Spleen (tissue), 13 donors: ENCODE measurements at regions of chr10 and their contacts with region 1.

Region 1: DNA sequence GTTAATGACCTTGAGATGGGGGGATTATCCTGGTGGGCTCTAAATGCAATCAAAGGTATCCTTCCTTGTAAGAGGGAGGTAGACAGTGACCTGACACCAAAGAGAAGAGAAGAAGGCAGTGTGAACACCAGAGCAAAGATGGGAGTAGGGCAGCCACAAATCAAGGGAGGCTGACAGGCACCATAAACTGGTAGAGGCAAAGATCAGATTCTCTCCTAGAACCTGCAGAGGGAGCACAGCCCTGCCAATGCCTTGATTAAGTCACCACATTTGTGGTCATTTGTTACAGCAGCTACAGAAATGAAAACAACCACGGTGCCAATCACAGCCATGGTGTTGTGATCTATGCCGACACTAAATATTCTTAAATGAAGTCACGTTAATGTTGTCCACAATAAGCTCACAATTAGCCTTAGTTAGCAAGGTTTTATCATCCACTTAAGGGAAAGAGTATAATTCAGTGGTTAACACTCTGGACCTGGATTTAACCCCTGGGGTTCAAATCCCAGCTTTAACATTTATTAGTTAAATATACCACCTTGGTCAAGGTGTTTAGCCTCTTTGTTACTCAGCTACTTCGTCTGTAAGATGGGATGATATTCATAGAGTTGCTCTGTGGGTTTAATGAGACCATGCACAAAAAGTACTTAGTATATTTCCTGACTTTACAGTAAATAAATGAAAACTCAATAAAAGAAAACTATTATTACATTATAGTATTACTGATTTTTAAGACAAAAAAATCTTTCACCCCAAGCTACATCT is 70.8 kb downstream of the SGMS1 start:
- DNase-seq: no peak
- H3K4me3 ChIP-seq: no peak overlapping the region
- H3K27ac ChIP-seq: peak overlapping the region in 3 of 8 donors; percentile 4 to 32 (median 4)
- H3K4me1 ChIP-seq: peaks cover 4 to 78% (median 41%) of the 10 kb centered on the region in 6 donors
- H3K27me3 ChIP-seq: no peaks in the 10 kb centered on the region
- CTCF ChIP-seq: peak in 4 of 11 experiments; percentile 10 to 33 (median 18)
- POLR2A ChIP-seq: no peak

Region 2: GRCh38 chr10:50396491-50397311 is 156.3 kb before region 1 on chr10:
- intact Hi-C with region 1: no loop called
- DNase-seq: no peak
- H3K4me3 ChIP-seq: no peak overlapping the region
- H3K27ac ChIP-seq: peak overlapping the region in 2 of 8 donors; percentile 2 to 15
- H3K4me1 ChIP-seq: peaks cover 0 to 69% (median 34%) of the 10 kb centered on the region in 6 donors
- H3K27me3 ChIP-seq: no peaks in the 10 kb centered on the region
- CTCF ChIP-seq: no peak
- POLR2A ChIP-seq: no peak

Region 3: GRCh38 chr10:50614444-50615137 is 61.6 kb after region 1 on chr10:
- intact Hi-C with region 1: loop called (anchors 10 kb)
- DNase-seq: no peak
- H3K4me3 ChIP-seq: no peak overlapping the region
- H3K27ac ChIP-seq: no peak overlapping the region
- H3K4me1 ChIP-seq: peaks cover 9 to 88% (median 31%) of the 10 kb centered on the region in 6 donors
- H3K27me3 ChIP-seq: no peaks in the 10 kb centered on the region
- CTCF ChIP-seq: peak in 2 of 11 experiments; percentile 21 to 25
- POLR2A ChIP-seq: no peak